Natural killer cell (primary cell): ENCODE measurements at regions of chr1 and their contacts with region 1.

Region 1: GRCh38 chr1:180178511-180179161 is 24.0 kb downstream of the QSOX1 start:
- DNase-seq: peak; percentile 60 to 79
- ATAC-seq: peak; percentile 77 to 98 (median 84)
- H3K4me3 ChIP-seq: no peak overlapping the region
- H3K4me3 Mint-ChIP-seq: no peak overlapping the region
- H3K27ac ChIP-seq: no peak overlapping the region
- H3K27ac Mint-ChIP-seq: no peak overlapping the region
- H3K4me1 ChIP-seq: no peaks in the 10 kb centered on the region
- H3K4me1 Mint-ChIP-seq: peaks cover under 1 to 4% of the 10 kb centered on the region in 2 donors
- H3K27me3 ChIP-seq: no peaks in the 10 kb centered on the region
- H3K27me3 Mint-ChIP-seq: no peaks in the 10 kb centered on the region
- CTCF ChIP-seq: peak; percentile 98

Region 2: DNA sequence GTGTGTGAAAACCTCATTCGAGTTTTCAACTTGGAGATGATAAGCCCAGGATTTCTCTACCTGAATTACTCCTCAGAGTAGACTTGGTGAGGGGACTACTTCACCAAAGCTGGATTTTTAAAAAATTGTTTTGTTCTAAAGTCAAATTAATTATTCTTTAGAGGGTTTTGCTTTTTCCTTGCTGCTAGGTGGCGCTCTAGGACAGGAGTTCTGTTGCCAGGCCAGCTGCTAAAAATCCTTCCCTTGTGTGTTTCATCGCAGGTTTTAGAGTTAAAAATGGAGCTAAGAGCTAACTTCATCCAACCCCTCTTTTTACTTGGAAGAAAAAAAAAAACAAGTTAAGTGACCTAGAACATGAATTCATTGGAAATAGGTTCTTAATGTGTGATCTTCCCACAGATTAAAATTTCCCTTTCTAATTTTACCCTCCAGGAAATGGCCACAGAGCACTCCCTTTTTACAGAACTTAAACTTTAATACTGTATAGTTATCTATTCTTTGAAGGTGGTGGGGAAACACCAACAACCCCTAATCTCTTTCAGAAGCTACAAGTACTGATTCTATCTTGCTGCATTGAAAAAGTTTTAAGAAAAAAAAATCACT is 472.2 kb before region 1 on chr1:
- intact Hi-C with region 1: loop called (anchors 2 kb)
- DNase-seq: peak in 1 of 2 donors; percentile 85
- ATAC-seq: no peak
- H3K4me3 ChIP-seq: no peak overlapping the region
- H3K4me3 Mint-ChIP-seq: no peak overlapping the region
- H3K27ac ChIP-seq: no peak overlapping the region
- H3K27ac Mint-ChIP-seq: no peak overlapping the region
- H3K4me1 ChIP-seq: no peaks in the 10 kb centered on the region
- H3K4me1 Mint-ChIP-seq: peaks cover 0 to 8% of the 10 kb centered on the region in 2 donors
- H3K27me3 ChIP-seq: no peaks in the 10 kb centered on the region
- H3K27me3 Mint-ChIP-seq: peaks cover 2 to 4% of the 10 kb centered on the region in 2 donors
- CTCF ChIP-seq: peak; percentile 61

Region 3: GRCh38 chr1:179867807-179868330 is 310.8 kb before region 1 on chr1:
- intact Hi-C with region 1: loop called (anchors 1 kb)
- DNase-seq: peak; percentile 35 to 73
- ATAC-seq: peak in 2 of 3 donors; percentile 77 to 89
- H3K4me3 ChIP-seq: no peak overlapping the region
- H3K4me3 Mint-ChIP-seq: no peak overlapping the region
- H3K27ac ChIP-seq: no peak overlapping the region
- H3K27ac Mint-ChIP-seq: peak overlapping the region in 1 of 2 donors; percentile 52
- H3K4me1 ChIP-seq: no peaks in the 10 kb centered on the region
- H3K4me1 Mint-ChIP-seq: peaks cover 18 to 24% of the 10 kb centered on the region in 2 donors
- H3K27me3 ChIP-seq: no peaks in the 10 kb centered on the region
- H3K27me3 Mint-ChIP-seq: no peaks in the 10 kb centered on the region
- CTCF ChIP-seq: peak; percentile 79

Region 4: GRCh38 chr1:180101411-180101810 is 77.2 kb before region 1 on chr1:
- intact Hi-C with region 1: loop called (anchors 5 kb)
- DNase-seq: no peak
- ATAC-seq: peak; percentile 48 to 69 (median 62)
- H3K4me3 ChIP-seq: no peak overlapping the region
- H3K4me3 Mint-ChIP-seq: peak overlapping the region; percentile 68
- H3K27ac ChIP-seq: no peak overlapping the region
- H3K27ac Mint-ChIP-seq: peak overlapping the region; percentile 87
- H3K4me1 ChIP-seq: peaks cover 10% of the 10 kb centered on the region
- H3K4me1 Mint-ChIP-seq: peaks cover 21 to 27% of the 10 kb centered on the region in 2 donors
- H3K27me3 ChIP-seq: no peaks in the 10 kb centered on the region
- H3K27me3 Mint-ChIP-seq: no peaks in the 10 kb centered on the region
- CTCF ChIP-seq: no peak